AG04449 (cell line): ENCODE measurements at regions of chr1 and their contacts with region 1.

Region 1: DNA sequence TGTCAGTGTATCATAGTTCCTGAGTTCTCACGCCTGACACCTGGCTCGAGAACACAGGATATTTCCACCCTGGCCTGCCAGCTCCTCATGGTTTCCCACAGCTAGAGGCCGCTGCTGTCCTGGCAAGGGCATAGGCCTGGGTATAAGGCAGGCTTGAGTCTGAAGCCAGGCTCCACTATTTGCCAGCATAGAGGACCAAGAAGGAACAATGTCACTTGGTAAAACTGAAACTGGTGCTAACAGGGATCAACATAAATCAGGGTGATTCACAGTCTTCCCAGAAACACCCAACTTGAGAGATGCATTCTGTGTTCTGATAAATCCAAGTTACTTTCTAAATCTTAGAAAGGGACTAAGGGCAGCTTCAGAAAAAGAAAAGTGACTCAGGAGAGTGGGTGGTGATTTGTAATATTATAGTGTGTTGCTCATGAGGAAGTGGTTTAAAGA is 6.9 kb upstream of the S100A2 start:
- DNase-seq: no peak
- H3K4me3 ChIP-seq: no peak overlapping the region
- CTCF ChIP-seq: peak; percentile 91

Region 2: DNA sequence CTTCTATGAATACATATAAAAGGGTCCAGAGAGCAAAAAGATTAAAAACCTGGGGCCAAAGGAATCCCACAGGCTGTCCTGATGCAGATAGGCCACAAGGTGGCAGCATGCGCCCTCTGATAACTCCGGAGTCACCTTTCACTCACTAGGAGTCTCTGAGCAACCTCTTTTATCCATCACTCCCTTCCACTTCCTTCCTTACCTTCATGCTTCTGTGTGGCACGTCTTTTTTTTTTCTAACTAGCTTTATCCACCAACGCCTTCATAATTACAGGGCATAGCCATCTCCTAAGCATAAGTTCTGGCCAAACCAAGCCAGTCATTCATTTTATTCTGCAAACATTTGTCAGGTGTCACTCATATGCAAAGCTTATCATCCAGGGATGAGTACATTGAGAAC is 220.1 kb before region 1 on chr1:
- CTCF ChIA-PET with region 1: interaction called, 21 read pairs
- POLR2A ChIA-PET with region 1: no interaction called
- DNase-seq: peak; percentile 2
- H3K4me3 ChIP-seq: no peak overlapping the region
- CTCF ChIP-seq: peak; percentile 82

Region 3: GRCh38 chr1:153422450-153423068 is 150.0 kb before region 1 on chr1:
- CTCF ChIA-PET with region 1: no interaction called
- POLR2A ChIA-PET with region 1: no interaction called
- DNase-seq: no peak
- H3K4me3 ChIP-seq: no peak overlapping the region
- CTCF ChIP-seq: no peak

Region 4: DNA sequence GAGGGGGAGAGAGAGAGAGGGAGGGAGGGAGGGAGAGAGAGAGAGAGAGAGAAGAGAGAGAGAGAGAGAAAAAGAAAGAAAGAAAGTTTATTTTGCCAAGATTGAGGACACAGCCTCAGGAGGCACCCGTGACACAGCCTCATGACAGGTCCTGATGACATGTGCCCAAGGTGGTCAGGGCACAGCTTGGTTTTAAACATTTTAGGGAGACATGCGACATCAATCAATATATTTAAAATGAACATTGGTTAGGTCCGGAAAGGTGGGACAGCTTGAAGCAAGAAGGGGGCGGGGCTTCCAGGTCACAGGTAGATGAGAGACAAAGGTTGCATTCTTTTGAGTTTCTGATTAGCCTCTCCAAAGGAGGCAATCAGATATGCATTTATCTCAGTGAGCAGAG is 52.4 kb before region 1 on chr1:
- CTCF ChIA-PET with region 1: interaction called, 401 read pairs
- POLR2A ChIA-PET with region 1: no interaction called
- DNase-seq: no peak
- H3K4me3 ChIP-seq: no peak overlapping the region
- CTCF ChIP-seq: no peak

Region 5: DNA sequence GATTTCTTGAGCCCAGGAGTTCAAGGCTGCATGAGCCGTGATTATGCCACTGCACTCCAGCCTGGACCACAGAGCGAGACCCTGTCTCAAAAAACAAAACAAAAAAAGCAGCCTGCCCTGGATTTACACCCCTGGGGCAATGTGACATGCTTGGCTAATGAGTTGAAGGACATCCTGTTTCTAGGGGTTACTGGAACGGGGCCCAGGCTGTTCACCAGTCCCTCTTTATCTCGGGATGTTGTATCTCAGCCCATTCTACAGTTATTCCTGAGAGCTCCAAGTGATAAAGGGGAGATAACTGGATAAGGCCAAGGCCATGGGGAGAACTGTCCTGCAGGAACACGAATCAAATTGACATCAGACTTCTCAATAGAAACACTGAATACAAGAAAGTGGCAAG is 14.7 kb after region 1 on chr1:
- CTCF ChIA-PET with region 1: interaction called, 19 read pairs
- POLR2A ChIA-PET with region 1: no interaction called
- DNase-seq: no peak
- H3K4me3 ChIP-seq: no peak overlapping the region
- CTCF ChIP-seq: no peak

Region 6: GRCh38 chr1:153617675-153618074 is 45.1 kb after region 1 on chr1:
- CTCF ChIA-PET with region 1: interaction called, 148 read pairs
- POLR2A ChIA-PET with region 1: interaction called, 6 read pairs
- DNase-seq: no peak
- H3K4me3 ChIP-seq: no peak overlapping the region
- CTCF ChIP-seq: peak; percentile 81

Region 7: DNA sequence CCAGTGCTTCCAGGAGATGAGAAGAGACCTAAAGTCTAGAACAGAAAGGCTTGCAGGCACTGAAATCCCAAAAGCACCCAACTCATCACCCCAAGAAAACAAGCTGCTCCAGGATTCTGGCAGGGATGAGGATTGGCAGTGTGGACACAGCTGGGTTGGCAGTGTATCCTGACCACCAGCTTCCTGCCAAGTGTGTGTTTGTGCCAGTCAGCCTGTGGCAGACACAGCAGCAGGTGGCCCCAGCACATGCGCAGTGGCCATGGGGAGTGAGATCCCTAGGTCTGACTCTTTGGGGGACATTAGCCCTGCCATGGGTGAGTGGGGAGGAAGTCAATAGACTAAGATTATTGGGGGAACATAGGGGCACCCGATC is 77.3 kb after region 1 on chr1:
- CTCF ChIA-PET with region 1: interaction called, 14 read pairs
- POLR2A ChIA-PET with region 1: no interaction called
- DNase-seq: no peak
- H3K4me3 ChIP-seq: no peak overlapping the region
- CTCF ChIP-seq: no peak

Region 8: DNA sequence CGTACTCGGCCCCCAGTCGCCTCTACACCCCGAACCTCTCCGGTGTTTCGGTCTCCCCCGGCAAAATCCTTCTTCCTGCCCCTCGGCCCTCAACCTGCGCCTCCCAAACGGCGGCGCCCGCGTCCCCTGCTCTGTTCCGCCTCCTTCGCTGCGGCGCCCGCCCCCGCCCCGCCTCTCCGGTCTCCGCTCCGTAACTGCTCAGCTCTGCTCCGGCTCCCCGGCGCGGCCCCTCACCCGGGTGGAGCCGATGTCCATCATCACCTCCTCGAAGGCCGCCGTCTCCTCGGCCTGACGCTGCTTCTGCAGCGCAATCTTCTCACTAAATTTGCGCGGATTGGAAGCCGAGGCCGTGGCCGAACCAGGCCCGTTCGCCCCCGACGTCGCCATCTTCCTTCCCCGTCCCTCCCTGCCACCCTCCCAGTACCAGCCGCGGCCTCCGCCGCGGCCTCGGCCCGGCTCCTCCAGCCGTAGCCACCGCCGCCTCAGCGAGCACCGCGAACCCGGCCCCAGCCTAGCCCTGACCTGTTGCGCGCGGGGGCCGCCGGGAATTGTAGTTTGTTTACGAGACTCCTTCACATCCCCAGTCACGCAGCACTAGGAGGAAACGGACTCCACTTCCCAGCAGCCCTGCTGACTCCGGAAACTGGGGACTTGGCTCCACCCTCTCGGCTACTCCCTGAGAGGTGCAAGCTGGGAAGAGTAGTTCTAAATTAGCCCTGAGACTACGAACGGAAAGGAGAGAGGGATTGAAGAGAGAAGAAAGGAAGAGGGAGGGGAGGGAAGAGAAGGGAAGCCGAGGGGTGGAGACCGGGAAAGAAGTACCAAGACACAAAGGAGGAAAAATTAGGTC is 385.7 kb after region 1 on chr1 and contains the start of gene CRTC2:
- CTCF ChIA-PET with region 1: no interaction called
- POLR2A ChIA-PET with region 1: no interaction called
- DNase-seq: peak; percentile 85
- H3K4me3 ChIP-seq: peak within 1 kb of the TSS; percentile 94
- CTCF ChIP-seq: peak; percentile 2

Region 9: DNA sequence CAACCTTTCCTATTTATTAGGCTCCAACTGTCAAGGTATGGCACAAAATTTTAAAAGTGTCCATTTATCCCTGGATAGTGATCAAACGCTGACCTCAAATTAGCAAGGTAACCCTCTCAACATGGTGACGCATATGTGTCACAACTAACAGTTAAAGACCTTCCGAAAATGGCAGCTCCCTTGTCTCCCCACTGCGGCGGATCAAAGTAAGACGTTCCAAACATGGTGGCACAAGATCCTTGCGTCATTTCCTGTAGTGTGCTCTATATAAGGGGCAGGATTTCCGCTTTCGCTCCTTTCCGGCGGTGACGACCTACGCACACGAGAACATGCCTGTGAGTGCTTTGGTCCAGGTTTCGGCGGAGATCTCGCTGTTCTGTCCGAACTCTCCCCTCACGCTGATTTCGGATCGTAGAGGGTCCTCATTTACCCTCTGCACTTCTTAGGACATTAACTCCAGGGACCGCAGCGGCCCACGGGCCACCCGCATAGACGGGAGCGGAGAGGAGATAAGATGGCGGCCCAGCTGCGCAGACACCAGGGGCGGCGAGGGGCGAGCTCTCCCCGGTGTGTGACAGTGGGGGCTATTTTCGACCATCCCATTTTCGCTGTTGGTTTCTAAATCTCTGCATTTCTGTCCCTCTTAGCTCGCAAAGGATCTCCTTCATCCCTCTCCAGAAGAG is 418.0 kb after region 1 on chr1 and contains the start of gene RPS27:
- CTCF ChIA-PET with region 1: interaction called, 10 read pairs
- POLR2A ChIA-PET with region 1: no interaction called
- DNase-seq: peak; percentile 88
- H3K4me3 ChIP-seq: peak within 1 kb of the TSS; percentile 69
- CTCF ChIP-seq: no peak